HAP-1 (cell line): ENCODE measurements at regions of chr17 and their contacts with region 1.

Region 1: GRCh38 chr17:79082311-79083190 is 7.9 kb downstream of the ENGASE start:
- DNase-seq: peak in 1 of 2 experiments; percentile 77
- H3K4me3 ChIP-seq: no peak overlapping the region
- H3K4me1 ChIP-seq: no peaks in the 10 kb centered on the region
- H3K27me3 ChIP-seq: no peaks in the 10 kb centered on the region

Region 2: DNA sequence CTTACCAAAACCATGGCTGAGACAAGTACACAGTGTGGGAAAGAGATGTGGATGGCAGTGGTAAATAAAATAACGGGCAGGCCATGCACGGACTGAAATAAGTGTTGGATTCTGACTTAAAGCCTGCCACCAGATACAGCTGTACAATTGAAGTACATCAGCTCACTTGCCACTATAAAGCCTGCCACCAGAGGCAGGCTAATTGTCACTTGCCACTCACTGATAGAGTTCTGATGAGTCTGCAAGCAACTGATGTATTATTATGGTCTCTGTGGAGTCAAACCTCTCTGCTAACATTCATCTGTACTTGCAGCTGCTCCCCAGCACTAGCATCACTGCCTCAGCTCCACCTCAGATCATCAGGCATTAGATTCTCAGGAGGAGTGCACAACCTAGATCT is 393.5 kb before region 1 on chr17:
- in situ Hi-C with region 1: no loop called
- DNase-seq: no peak
- H3K4me3 ChIP-seq: no peak overlapping the region
- H3K4me1 ChIP-seq: no peaks in the 10 kb centered on the region
- H3K27me3 ChIP-seq: no peaks in the 10 kb centered on the region

Region 3: GRCh38 chr17:79045842-79046196 is 36.7 kb before region 1 on chr17:
- in situ Hi-C with region 1: loop called (anchors 5 kb)
- DNase-seq: peak; percentile 70 to 84
- H3K4me3 ChIP-seq: no peak overlapping the region
- H3K4me1 ChIP-seq: peaks cover 7% of the 10 kb centered on the region
- H3K27me3 ChIP-seq: no peaks in the 10 kb centered on the region